Activated B cell treated with CpG ODN at 0.5 μM for 24 hours (primary cell): ENCODE measurements at regions of chr11 and their contacts with region 1.

Region 1: DNA sequence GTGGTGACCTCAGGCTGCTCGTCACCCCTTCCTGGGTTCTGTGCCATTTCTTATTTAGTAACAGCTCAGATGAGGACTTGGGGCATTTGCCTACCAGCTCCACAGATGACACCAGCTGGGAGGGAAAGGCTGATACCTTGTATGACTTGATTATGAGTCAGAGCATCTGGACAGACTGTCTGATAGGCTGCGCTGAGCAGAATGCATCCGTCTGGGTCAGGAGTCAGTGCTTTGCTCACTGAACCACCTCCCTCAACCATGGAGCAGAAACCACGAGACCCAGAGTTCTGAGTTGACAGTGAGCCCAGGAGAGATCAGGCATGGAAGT is 6.8 kb downstream of the ST14 start:
- DNase-seq: peak; percentile 48
- ATAC-seq: peak; percentile 87
- H3K4me3 Mint-ChIP-seq: peak overlapping the region; percentile 66
- H3K27ac Mint-ChIP-seq: peak overlapping the region; percentile 93
- H3K4me1 Mint-ChIP-seq: peaks cover 84% of the 10 kb centered on the region
- H3K27me3 Mint-ChIP-seq: no peaks in the 10 kb centered on the region
- CTCF ChIP-seq: no peak

Region 2: DNA sequence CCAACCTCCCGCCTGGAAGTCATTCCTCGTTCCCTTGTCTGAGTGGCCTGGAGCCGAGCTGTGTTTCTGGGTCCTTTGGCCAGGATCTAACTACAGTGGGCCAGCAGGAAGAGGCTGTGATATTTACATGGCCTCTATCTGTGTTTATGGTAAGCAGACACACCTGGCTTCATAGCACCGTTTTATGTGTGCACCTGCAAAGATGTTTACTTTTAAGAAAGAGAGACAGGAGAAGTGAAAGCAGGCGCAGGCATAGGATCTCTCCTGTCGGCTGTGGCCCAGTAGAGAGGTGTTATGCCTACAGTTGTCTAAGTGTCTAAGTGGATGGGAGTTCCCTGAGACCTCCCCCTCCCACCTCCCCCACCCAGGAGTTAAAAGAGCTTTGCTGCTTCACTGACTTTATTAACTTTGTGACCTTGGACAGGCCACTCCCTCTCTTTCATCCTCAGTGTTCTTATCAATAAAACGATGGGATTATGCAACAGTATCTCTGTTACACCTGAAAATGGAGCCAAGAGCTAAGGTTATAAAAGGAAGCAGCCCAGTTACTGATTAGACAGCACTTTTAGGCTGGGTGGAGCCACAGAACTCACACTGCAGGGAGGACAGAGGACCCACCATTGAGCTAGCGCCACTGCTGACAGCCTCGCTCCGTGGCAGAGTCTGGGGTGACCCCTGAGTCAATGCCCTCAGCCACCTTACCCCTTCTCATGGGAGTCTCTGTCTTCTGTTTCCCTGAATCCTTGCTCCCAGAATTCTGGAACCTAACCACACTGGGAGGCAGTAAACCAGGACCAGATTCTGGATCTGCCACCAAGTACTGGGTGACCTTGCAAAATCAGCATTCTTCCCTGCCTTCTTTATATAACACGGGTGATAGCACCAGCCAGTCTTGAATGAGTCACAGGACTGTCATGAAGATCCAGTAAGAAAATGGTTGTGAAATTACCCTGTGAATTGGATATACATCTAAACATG is 15.2 kb after region 1 on chr11:
- CTCF ChIA-PET with region 1: no interaction called
- POLR2A ChIA-PET with region 1: interaction called, 7 read pairs
- intact Hi-C with region 1: loop called (anchors 1 kb)
- DNase-seq: no peak
- ATAC-seq: peak; percentile 61
- H3K4me3 Mint-ChIP-seq: peak overlapping the region; percentile 21
- H3K27ac Mint-ChIP-seq: peak overlapping the region; percentile 75
- H3K4me1 Mint-ChIP-seq: peaks cover 52% of the 10 kb centered on the region
- H3K27me3 Mint-ChIP-seq: no peaks in the 10 kb centered on the region
- CTCF ChIP-seq: no peak

Region 3: DNA sequence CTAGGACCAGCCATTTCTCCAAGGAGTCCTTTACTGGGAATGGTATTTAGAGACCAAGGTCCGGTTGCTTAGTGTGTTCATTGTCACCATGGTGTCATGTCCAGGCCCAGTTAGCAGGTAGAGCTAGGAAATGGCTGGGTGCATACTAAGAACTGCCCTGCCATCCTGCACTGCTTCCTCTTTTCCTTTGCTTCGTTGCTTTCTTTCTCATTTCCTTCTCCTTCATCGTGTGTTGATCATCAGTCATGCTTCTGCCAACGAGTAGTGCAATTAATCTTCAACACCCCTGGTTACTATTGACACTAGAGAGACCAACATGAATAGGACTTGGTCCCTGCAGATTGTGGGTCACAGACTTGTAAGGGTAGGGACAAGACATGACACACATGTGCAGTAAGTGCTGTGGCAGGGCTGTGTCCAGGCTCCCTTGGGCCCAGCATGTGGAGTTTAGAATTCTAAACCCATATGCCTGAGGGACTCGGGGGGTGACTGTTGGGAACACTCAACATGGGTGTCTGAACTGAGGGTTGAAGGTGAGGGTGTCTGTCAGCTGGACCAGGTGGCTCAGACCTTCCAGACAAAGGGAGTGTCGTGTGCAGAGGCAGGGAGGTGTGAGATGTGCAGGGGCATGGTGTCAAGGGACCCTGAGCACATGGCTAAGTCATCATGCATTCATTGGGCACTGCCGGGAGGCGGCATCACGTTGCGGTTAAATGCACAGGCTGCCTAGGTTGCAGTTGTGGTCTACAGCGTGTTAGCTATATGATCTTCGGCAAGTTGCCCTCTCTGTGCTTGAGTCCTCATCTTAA is 35.8 kb after region 1 on chr11:
- CTCF ChIA-PET with region 1: no interaction called
- POLR2A ChIA-PET with region 1: interaction called, 6 read pairs
- intact Hi-C with region 1: loop called (anchors 2 kb)
- DNase-seq: no peak
- ATAC-seq: peak; percentile 84
- H3K4me3 Mint-ChIP-seq: no peak overlapping the region
- H3K27ac Mint-ChIP-seq: peak overlapping the region; percentile 2
- H3K4me1 Mint-ChIP-seq: peaks cover 32% of the 10 kb centered on the region
- H3K27me3 Mint-ChIP-seq: no peaks in the 10 kb centered on the region
- CTCF ChIP-seq: no peak